MCF 10A (cell line): ENCODE measurements at regions of chr13 and their contacts with region 1.

Region 1: DNA sequence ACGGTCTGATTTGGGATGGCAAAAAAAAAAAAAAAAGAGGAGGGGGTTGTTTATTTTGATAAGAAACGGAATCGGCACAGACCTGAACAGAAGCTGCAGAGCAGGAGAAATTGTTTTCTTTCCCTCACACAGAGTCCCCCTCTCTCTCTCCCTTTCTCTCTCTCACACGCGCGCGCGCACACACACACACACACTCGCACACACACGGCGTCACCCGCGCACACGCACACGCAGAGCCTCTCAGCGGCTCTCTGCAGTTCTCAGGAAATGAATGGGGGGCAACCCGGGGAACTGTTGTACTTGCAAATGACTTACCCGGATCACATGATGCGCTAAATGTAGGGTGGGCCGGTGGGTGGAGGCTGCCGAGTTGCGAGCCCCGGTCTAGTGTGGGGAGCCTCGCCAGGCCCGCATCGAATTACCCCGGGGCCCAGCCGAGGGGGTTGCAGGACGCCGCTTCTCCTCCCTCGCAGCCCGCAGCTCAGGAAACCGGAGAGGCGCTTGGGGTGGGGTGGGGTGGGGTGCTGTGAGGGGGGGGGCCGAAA is 475 bp downstream of the KLF12 start:
- DNase-seq: peak; percentile 73
- H3K4me3 Mint-ChIP-seq: no peak overlapping the region
- H3K27ac Mint-ChIP-seq: peak overlapping the region; percentile 91
- H3K4me1 Mint-ChIP-seq: peaks cover 18% of the 10 kb centered on the region
- H3K27me3 Mint-ChIP-seq: no peaks in the 10 kb centered on the region
- CTCF ChIP-seq: no peak

Region 2: GRCh38 chr13:73754727-73755292 is 378.9 kb before region 1 on chr13:
- CTCF ChIA-PET with region 1: no interaction called
- POLR2A ChIA-PET with region 1: no interaction called
- intact Hi-C with region 1: loop called (anchors 5 kb)
- DNase-seq: peak; percentile 71
- H3K4me3 Mint-ChIP-seq: no peak overlapping the region
- H3K27ac Mint-ChIP-seq: no peak overlapping the region
- H3K4me1 Mint-ChIP-seq: peaks cover 5% of the 10 kb centered on the region
- H3K27me3 Mint-ChIP-seq: no peaks in the 10 kb centered on the region
- CTCF ChIP-seq: peak; percentile 61

Region 3: DNA sequence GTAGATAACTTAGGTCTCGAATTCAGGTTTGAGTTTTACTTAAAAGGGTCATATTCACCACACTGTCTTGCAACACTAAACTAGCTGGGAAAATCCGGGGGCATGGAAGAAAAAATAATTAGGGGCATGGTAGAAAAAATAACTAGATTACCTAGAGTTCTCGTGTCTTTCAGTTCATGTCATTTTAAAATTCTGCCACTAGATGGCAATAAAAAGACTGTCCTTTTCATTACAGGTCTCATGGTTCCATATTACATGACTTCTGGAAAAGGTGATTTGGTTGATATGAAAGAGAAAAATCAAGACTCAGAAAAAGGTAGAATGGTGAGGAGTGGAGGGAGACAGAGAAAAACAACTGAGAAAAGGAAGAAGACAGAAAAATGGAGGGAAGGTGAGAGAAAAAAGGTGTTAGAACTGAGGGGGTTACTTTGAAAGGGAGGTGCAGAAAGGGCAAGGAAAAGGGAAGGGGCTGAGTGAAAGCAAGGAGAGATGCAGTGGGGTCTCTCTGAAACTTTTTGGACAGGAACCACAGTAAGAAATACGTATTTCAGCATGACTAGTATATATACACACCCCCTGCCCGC is 298.5 kb before region 1 on chr13:
- CTCF ChIA-PET with region 1: interaction called, 3 read pairs
- POLR2A ChIA-PET with region 1: interaction called, 3 read pairs
- intact Hi-C with region 1: loop called (anchors 2 kb)
- DNase-seq: peak; percentile 61
- H3K4me3 Mint-ChIP-seq: no peak overlapping the region
- H3K27ac Mint-ChIP-seq: no peak overlapping the region
- H3K4me1 Mint-ChIP-seq: peaks cover 5% of the 10 kb centered on the region
- H3K27me3 Mint-ChIP-seq: no peaks in the 10 kb centered on the region
- CTCF ChIP-seq: peak; percentile 58

Region 4: DNA sequence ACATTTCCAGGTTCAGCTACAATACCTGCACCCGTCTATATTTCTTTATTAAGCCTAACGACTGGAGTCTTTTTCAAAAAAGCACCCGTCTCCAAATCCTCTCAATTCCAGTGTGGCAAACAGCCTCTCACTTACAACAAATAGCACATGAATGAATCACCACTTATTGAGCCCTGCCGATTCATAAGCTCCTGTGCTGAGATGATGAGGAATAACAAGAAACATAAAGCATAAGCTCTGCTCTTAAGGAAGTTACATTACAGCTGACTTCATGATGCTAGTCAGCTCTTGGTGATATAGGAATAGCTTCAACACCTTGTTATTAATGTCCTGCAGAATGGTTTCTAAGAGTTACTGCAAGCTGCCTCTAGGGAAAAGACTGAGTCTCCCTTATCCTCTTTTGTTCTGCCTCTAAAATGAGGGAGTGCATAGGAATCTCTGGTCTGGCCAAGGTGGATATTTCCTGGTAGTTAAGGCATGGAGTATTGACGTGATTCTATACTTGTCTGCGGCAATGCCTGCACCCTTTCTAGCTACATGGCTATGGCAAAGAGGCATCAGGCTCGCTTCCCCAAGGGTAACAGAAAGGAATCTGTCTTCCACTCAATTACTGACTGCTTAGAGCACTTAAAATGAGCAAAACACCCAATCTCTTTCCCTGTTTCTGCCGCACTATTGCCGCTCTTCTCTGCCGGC is 195.2 kb before region 1 on chr13:
- CTCF ChIA-PET with region 1: no interaction called
- POLR2A ChIA-PET with region 1: interaction called, 3 read pairs
- intact Hi-C with region 1: loop called (anchors 5 kb)
- DNase-seq: peak; percentile 69
- H3K4me3 Mint-ChIP-seq: peak overlapping the region; percentile 43
- H3K27ac Mint-ChIP-seq: peak overlapping the region; percentile 81
- H3K4me1 Mint-ChIP-seq: peaks cover 30% of the 10 kb centered on the region
- H3K27me3 Mint-ChIP-seq: no peaks in the 10 kb centered on the region
- CTCF ChIP-seq: no peak

Region 5: DNA sequence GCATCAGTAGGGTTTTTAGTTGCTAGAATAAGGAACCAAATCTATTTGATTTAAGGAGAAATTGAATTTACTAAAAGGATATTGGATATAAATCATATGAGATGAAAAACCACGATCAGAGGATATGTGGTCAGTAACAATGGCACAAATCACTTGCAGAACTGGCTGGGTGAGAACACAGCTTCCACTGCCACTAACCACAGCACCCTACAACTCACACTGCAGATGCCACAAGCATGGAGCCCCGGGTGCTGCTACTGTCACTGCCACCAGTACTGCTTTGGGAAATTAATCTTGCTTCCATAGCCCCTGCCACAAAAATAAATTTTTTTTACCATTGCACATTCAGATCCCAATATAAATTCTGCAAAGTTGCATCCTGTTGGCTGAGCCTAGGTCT is 41.1 kb after region 1 on chr13:
- CTCF ChIA-PET with region 1: no interaction called
- POLR2A ChIA-PET with region 1: no interaction called
- intact Hi-C with region 1: no loop called
- DNase-seq: no peak
- H3K4me3 Mint-ChIP-seq: no peak overlapping the region
- H3K27ac Mint-ChIP-seq: no peak overlapping the region
- H3K4me1 Mint-ChIP-seq: no peaks in the 10 kb centered on the region
- H3K27me3 Mint-ChIP-seq: no peaks in the 10 kb centered on the region
- CTCF ChIP-seq: no peak

Region 6: DNA sequence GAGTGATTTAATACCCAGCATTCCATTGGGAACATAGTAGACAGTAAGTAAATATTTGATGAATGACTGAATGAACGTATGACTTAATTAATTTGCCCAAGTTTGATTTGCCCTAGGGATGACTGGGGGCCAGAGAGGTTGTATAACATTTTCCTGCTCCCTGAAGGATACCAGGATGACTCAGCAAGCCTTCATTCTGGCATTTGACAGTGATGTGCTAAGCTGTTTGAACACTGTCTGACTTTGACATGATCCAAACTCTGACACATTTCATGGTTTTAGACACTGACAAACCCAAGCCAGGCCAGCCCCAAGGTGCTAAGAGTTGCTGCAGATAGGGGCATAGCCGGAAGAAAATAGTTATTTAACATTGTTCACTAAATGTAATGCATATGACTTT is 53.8 kb after region 1 on chr13:
- CTCF ChIA-PET with region 1: no interaction called
- POLR2A ChIA-PET with region 1: no interaction called
- intact Hi-C with region 1: no loop called
- DNase-seq: peak; percentile 66
- H3K4me3 Mint-ChIP-seq: no peak overlapping the region
- H3K27ac Mint-ChIP-seq: no peak overlapping the region
- H3K4me1 Mint-ChIP-seq: no peaks in the 10 kb centered on the region
- H3K27me3 Mint-ChIP-seq: no peaks in the 10 kb centered on the region
- CTCF ChIP-seq: no peak

Region 7: DNA sequence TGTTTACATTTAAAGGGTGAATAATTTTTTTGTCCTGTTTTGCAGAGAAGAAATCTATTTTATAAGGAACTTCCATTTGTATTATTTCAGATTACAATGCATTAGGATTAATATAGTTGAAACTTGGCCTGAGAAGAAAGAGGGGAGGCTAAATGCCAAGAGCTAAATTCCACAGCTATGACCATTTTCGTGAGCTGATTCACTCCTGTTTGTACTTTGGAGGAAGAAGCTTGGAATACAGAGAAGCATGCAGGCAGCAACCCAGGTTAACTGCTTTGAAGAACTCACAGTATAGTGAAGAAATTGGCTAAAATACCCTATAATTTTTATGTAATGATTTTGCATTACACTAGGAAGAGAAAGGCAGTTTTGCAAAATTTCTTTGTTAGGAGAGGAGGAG is 309.9 kb after region 1 on chr13:
- CTCF ChIA-PET with region 1: no interaction called
- POLR2A ChIA-PET with region 1: interaction called, 3 read pairs
- intact Hi-C with region 1: loop called (anchors 5 kb)
- DNase-seq: peak; percentile 78
- H3K4me3 Mint-ChIP-seq: peak overlapping the region; percentile 59
- H3K27ac Mint-ChIP-seq: peak overlapping the region; percentile 43
- H3K4me1 Mint-ChIP-seq: peaks cover 20% of the 10 kb centered on the region
- H3K27me3 Mint-ChIP-seq: no peaks in the 10 kb centered on the region
- CTCF ChIP-seq: no peak

Region 8: DNA sequence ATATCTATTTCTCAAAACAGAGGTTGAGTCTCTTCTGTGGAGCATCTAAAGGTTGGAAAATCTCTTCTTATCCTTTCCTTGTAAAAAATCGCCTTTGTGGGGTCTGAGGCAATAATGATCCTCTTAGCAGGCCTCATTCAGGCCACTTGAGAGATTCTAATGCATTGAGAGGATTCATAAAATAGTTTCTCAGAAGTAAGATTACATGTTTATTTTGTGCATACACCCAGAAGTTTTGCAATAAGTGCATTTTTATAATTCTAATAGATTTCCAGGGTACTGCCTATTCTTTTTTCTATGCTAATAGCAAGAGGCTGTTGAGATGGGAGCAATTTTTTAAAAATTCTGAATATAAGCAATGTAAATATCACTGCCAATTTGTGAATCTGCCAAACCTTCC is 342.6 kb after region 1 on chr13:
- CTCF ChIA-PET with region 1: no interaction called
- POLR2A ChIA-PET with region 1: no interaction called
- intact Hi-C with region 1: no loop called
- DNase-seq: no peak
- H3K4me3 Mint-ChIP-seq: no peak overlapping the region
- H3K27ac Mint-ChIP-seq: no peak overlapping the region
- H3K4me1 Mint-ChIP-seq: no peaks in the 10 kb centered on the region
- H3K27me3 Mint-ChIP-seq: no peaks in the 10 kb centered on the region
- CTCF ChIP-seq: no peak

Region 9: DNA sequence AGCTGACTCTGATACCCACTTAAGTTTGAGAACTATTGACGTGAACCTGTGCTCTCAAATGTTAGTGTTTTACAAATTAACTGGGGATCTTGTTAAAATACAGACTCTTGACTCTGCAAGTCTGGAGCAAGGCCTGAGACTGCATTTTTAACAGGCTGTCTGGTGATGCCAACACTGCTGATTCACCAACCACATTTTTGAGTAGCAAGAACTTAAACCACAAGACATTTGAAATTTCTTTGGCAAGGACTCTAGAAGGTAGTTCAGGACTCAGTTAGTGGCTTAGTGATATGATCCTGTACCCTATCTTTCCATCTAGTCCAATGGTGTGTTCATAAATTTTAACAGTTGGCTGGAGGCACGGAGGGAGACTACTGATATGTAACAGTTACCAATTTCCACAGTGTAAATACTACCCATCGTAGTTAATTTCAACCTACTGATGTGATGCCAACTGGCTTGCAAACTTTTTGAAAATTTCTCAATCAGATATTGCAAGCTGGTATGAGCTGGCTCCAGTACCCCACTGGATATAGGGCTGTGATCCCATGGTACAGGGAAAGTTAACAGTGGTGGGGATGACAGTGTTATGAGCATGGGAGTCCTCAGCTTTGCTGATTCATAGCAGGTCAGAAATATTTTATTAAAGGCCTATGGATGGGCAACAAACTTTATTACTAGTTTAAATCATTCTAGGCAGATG is 1093.2 kb after region 1 on chr13:
- CTCF ChIA-PET with region 1: no interaction called
- POLR2A ChIA-PET with region 1: no interaction called
- intact Hi-C with region 1: loop called (anchors 2 kb)
- DNase-seq: peak; percentile 92
- H3K4me3 Mint-ChIP-seq: peak overlapping the region; percentile 64
- H3K27ac Mint-ChIP-seq: peak overlapping the region; percentile 93
- H3K4me1 Mint-ChIP-seq: peaks cover 46% of the 10 kb centered on the region
- H3K27me3 Mint-ChIP-seq: no peaks in the 10 kb centered on the region
- CTCF ChIP-seq: no peak

Region 10: DNA sequence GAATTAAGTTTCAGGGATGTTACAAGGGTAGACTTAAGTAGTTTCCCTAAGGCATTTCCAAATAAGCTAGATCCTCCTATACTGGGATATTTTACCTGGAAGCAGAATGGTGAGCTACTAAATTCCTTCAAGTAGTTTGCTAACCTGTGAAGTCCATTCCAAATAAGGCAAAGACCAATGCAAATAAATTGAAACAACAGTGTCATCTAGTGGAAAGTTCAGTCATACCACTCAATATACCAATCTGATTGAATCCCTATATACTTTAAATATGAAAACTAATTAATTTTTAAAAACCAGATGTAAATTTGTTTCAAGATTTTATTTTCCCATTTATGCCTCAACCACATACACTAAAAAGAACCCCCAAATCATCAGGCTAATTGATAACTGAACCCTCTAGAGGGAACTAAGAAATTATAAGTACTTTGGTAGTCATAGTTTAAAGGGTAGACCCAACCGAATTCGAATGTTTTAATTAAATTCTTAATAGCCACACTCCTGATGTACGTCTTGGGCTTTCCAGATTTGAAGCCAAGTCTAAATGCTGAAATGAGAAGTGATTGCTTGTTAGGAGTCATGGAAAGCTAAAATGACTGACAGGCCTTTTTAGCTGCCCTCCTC is 1124.5 kb after region 1 on chr13:
- CTCF ChIA-PET with region 1: no interaction called
- POLR2A ChIA-PET with region 1: no interaction called
- intact Hi-C with region 1: loop called (anchors 10 kb)
- DNase-seq: peak; percentile 70
- H3K4me3 Mint-ChIP-seq: no peak overlapping the region
- H3K27ac Mint-ChIP-seq: no peak overlapping the region
- H3K4me1 Mint-ChIP-seq: peaks cover 10% of the 10 kb centered on the region
- H3K27me3 Mint-ChIP-seq: no peaks in the 10 kb centered on the region
- CTCF ChIP-seq: peak; percentile 67

Region 11: GRCh38 chr13:75357576-75358289 is 1224.0 kb after region 1 on chr13:
- CTCF ChIA-PET with region 1: no interaction called
- POLR2A ChIA-PET with region 1: no interaction called
- intact Hi-C with region 1: no loop called
- DNase-seq: peak; percentile 87
- H3K4me3 Mint-ChIP-seq: no peak overlapping the region
- H3K27ac Mint-ChIP-seq: no peak overlapping the region
- H3K4me1 Mint-ChIP-seq: peaks cover 21% of the 10 kb centered on the region
- H3K27me3 Mint-ChIP-seq: no peaks in the 10 kb centered on the region
- CTCF ChIP-seq: peak; percentile 46